SK-MEL-5 (cell line): ENCODE measurements at regions of chr5 and their contacts with region 1.

Region 1: GRCh38 chr5:13987843-13988464 is 43.5 kb upstream of the DNAH5 start:
- DNase-seq: peak; percentile 83

Region 2: GRCh38 chr5:14286574-14287421 is 298.8 kb after region 1 on chr5:
- in situ Hi-C with region 1: loop called (anchors 25 kb)
- DNase-seq: no peak